ENCODE measurements at regions of chr10 and their contacts with region 1.

Region 1: GRCh38 chr10:104121520-104122224 is at the start of gene SFR1:
- DNase-seq: peak; percentile 100
- H3K4me3 Mint-ChIP-seq: peak within 1 kb of the TSS; percentile 90
- H3K27ac Mint-ChIP-seq: peak within 1 kb of the TSS; percentile 97
- H3K4me1 Mint-ChIP-seq: peaks cover 33% of the 10 kb centered on the region
- H3K27me3 Mint-ChIP-seq: no peaks in the 10 kb centered on the region
- total RNA-seq, gene SFR1: 16.8 to 19.2 TPM

Region 2: DNA sequence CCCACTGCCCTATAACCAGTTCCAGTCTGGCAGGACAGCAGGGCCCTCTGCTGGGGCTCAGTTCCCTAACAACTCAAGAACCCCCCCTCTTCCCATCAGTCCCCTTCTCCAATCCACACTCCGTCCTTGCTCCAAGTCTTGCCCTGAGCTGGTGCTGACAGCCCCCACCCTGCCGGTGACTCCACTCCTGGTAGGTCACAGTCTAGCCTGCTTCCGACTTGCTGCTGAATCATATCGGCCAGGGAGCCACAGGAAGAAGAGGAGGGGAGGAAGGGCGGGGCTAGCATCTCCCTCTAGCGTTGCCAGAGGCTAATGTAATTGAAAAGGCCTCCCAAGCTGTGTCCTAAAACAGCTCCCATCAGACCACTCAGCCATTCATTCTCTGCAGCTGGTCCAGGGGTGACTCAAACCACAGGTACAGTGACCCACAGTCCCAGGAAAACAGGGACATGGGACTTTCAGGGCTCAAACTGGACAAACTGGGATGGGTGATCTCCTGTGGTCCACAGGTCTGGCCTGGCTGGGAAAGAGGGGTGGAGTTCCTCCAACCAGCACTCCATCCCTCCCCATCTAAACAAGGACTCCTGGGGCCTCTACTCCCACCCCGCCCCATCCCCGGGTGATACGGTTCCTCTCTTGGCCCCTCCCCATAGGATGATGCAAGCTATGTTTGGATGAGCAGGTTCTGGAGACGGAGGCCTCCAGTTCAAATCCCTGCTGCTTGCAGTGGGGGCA is 425.1 kb before region 1 on chr10:
- CTCF ChIA-PET with region 1: interaction called, 3 read pairs
- POLR2A ChIA-PET with region 1: no interaction called
- intact Hi-C with region 1: loop called (anchors 5 kb)
- DNase-seq: peak; percentile 92
- H3K4me3 Mint-ChIP-seq: peak overlapping the region; percentile 48
- H3K27ac Mint-ChIP-seq: peak overlapping the region; percentile 77
- H3K4me1 Mint-ChIP-seq: peaks cover 30% of the 10 kb centered on the region
- H3K27me3 Mint-ChIP-seq: no peaks in the 10 kb centered on the region

Region 3: DNA sequence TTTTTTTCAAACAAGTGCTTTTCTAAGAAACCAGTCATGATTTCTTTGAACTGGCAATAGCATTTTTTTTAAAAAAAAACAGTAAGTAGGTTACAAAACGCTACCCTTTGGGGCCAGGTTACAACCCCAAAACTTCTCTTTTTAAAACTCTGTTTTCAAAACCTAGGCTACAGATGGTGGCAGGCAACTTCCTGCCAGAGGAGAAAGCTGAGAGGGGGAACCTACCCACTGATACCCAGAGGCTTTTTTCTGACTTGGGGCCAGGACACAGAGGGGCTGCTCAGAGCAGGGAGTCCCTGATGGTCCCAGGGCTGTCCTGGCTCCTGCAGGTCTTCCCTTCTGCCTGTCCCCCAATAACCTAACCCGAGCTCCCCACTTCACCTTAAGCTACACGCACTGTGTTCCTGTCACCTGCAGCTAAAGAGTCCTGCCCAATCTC is 210.6 kb before region 1 on chr10:
- CTCF ChIA-PET with region 1: interaction called, 3 read pairs
- POLR2A ChIA-PET with region 1: interaction called, 9 read pairs
- intact Hi-C with region 1: loop called (anchors 2 kb)
- DNase-seq: peak; percentile 60
- H3K4me3 Mint-ChIP-seq: peak overlapping the region; percentile 52
- H3K27ac Mint-ChIP-seq: peak overlapping the region; percentile 99
- H3K4me1 Mint-ChIP-seq: peaks cover 71% of the 10 kb centered on the region
- H3K27me3 Mint-ChIP-seq: no peaks in the 10 kb centered on the region

Region 4: DNA sequence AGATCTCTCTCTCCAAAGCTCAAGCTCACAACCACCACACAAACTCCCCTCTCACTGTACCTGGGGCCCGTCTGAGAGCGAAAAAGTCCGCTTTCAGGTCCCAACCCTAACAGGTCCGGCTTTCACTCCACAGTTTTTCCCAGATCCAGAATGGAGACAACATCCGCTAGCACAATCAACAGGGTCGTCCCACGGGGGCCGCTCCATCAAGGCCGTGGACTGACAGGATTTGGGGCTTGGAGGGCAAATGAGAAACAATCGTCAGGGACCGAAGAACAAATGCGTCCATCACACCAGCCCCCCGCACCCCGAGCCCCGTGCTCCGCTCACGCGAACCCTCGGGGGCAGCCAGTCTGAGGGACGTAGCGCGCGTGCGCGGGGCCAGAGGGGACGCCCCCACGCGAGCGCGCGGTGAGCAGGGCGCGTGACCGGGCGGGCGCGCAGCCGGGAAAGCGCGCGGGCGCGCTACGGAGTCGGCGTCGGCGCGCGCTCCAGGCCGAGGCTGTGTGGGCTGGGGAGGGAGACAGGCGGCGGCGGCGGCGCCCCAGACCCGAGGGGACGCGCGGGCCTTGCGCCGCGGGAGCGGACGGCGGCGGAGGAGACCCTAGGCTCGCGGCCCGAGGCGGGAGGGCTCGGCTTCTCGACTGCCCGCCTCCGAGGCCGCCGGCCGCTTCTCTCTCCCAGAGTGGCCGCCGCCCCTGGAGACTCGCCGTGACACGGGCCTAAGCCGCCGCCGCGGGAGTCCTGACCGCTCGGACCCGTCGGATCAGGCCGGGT is 154.8 kb before region 1 on chr10 and contains the start of gene SLK:
- CTCF ChIA-PET with region 1: interaction called, 9 read pairs
- POLR2A ChIA-PET with region 1: interaction called, 15 read pairs
- intact Hi-C with region 1: loop called (anchors 1 kb)
- DNase-seq: peak; percentile 86
- H3K4me3 Mint-ChIP-seq: peak within 1 kb of the TSS; percentile 94
- H3K27ac Mint-ChIP-seq: peak within 1 kb of the TSS; percentile 92
- H3K4me1 Mint-ChIP-seq: peaks cover 33% of the 10 kb centered on the region
- H3K27me3 Mint-ChIP-seq: no peaks in the 10 kb centered on the region
- total RNA-seq, gene SLK: 26.1 to 27.7 TPM

Region 5: GRCh38 chr10:104028146-104028545 is 93.5 kb before region 1 on chr10:
- CTCF ChIA-PET with region 1: interaction called, 4 read pairs
- POLR2A ChIA-PET with region 1: interaction called, 3 read pairs
- intact Hi-C with region 1: loop called (anchors 2 kb)
- DNase-seq: peak; percentile 50
- H3K4me3 Mint-ChIP-seq: no peak overlapping the region
- H3K27ac Mint-ChIP-seq: peak overlapping the region; percentile 5
- H3K4me1 Mint-ChIP-seq: peaks cover 14% of the 10 kb centered on the region
- H3K27me3 Mint-ChIP-seq: no peaks in the 10 kb centered on the region

Region 6: DNA sequence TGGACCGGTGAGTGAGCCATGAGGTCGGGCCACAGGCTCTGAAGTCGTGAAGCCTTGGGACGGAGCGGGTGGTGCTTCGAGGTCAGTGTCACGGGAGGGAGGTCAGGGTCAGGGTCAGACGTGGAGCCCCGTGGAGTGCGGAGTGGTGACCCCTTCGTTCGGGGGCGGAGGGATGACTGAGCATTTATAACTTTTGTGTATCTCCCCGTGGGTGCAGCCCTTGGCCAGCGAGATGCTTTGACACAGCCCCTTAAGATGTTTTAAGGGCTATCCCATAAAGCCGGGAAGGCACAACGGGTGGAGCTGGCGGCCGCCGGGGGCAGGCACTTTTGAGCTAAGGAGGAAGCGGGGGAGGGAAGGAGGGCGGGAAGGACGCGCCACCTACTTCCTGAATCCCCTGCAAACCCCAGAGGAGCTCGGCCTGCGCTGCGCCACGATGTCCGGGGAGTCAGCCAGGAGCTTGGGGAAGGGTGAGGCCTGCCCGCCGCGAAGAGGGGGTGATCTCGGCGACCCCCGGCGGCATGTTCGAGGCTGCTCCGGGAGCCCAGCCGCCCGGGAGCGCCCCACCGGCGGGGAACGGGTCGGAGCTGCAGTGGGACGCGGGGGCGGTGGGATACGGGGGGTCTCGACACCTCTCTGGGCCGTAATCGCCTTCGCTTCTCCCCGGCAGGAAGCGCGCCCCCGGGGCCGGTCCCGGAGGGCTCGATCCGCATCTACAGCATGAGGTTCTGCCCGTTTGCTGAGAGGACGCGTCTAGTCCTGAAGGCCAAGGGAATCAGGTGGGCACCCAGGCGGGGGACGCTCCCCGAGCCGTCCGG is 133.0 kb after region 1 on chr10 and contains the start of gene GSTO1:
- CTCF ChIA-PET with region 1: interaction called, 5 read pairs
- POLR2A ChIA-PET with region 1: interaction called, 15 read pairs
- intact Hi-C with region 1: no loop called
- DNase-seq: peak; percentile 73
- H3K4me3 Mint-ChIP-seq: peak within 1 kb of the TSS; percentile 93
- H3K27ac Mint-ChIP-seq: peak within 1 kb of the TSS; percentile 93
- H3K4me1 Mint-ChIP-seq: peaks cover 50% of the 10 kb centered on the region
- H3K27me3 Mint-ChIP-seq: peaks cover 3% of the 10 kb centered on the region
- total RNA-seq, gene GSTO1: 215 to 225 TPM

Region 7: DNA sequence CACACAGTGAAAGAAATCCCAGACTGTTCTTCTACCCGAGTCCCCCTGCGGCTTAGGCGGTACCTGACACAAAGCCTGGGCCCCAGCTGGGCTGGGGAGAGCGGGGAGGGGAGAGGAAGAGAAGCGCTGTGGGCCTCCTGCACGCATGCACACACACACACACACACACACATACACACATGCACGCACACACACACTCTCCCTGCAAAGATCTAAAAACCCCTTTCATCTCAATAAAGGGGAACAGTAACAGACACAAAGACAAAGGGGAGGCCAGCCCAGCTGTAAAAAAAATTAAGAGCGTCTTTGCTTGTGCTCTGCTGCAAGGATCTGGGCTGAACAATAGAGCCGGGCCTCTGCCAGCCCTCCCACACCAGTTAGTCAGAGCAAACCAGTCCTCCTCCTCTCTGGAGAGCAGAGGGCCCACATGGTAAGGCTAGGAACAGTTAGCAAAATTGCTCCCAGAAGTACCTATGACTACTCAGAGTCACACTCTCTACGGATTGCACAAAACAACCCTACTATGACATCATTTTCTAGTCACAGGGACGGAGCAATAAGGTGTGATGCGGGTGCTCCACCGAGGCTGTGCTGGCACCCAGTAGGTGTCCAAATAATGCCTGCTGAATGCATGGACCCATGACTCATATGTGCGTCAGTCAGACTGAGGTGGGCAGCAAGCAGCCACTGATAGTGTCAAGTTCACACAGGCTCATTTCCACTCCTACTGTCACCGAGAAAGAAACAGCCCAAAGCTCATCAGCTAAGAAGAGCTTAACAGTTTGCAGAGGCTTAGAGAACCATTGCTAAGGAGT is 207.4 kb after region 1 on chr10:
- CTCF ChIA-PET with region 1: no interaction called
- POLR2A ChIA-PET with region 1: no interaction called
- intact Hi-C with region 1: loop called (anchors 2 kb)
- DNase-seq: peak; percentile 92
- H3K4me3 Mint-ChIP-seq: peak overlapping the region; percentile 60
- H3K27ac Mint-ChIP-seq: peak overlapping the region; percentile 91
- H3K4me1 Mint-ChIP-seq: peaks cover 96% of the 10 kb centered on the region
- H3K27me3 Mint-ChIP-seq: no peaks in the 10 kb centered on the region

Region 8: DNA sequence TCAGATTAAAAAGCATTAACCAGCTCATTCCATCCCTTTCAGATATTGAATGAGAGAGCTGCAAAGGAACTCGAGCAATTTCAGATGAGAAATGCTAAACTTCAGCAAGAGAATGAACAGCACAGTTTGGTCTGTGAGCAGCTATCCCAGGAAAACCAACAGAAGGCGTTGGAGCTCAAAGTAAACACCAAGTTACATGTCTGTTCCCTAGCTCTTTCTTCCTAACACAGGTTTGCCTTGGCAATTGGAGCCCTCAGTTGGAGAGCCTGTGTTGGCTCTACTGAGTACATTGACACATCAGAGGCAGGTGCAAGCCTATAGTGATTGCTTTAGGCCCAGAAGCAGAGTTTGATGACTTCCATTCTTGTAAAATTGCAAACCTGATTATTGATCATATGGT is 246.7 kb after region 1 on chr10:
- CTCF ChIA-PET with region 1: no interaction called
- POLR2A ChIA-PET with region 1: no interaction called
- intact Hi-C with region 1: no loop called
- DNase-seq: no peak
- H3K4me3 Mint-ChIP-seq: no peak overlapping the region
- H3K27ac Mint-ChIP-seq: no peak overlapping the region
- H3K4me1 Mint-ChIP-seq: no peaks in the 10 kb centered on the region
- H3K27me3 Mint-ChIP-seq: peaks cover 27% of the 10 kb centered on the region

Region 9: GRCh38 chr10:104766341-104766740 is 644.7 kb after region 1 on chr10:
- CTCF ChIA-PET with region 1: no interaction called
- POLR2A ChIA-PET with region 1: no interaction called
- intact Hi-C with region 1: no loop called
- DNase-seq: no peak
- H3K4me3 Mint-ChIP-seq: no peak overlapping the region
- H3K27ac Mint-ChIP-seq: no peak overlapping the region
- H3K4me1 Mint-ChIP-seq: no peaks in the 10 kb centered on the region
- H3K27me3 Mint-ChIP-seq: peaks cover 3% of the 10 kb centered on the region

Measured in activated CD4-positive, alpha-beta memory T cell treated with anti-CD3 and anti-CD28 coated beads for 36 hours (primary cell).